Activated T-helper 1 cell treated with anti-CD3 and anti-CD28 coated beads, Interleukin-12 subunit alpha, Interleukin-12 subunit beta, Interleukin-2, Interleukin-4 antibody, amounts not matched to agents 30 ng/mL and 10 ng/mL and 1 ng/mL, durations not matched to agents 14 hours and 24 hours and 36 hours (primary cell): ENCODE measurements at regions of chr6 and their contacts with region 1.

Region 1: GRCh38 chr6:3157131-3157927 is at the start of gene TUBB2A:
- DNase-seq: peak; percentile 83
- H3K4me3 Mint-ChIP-seq: peak within 1 kb of the TSS; percentile 86
- H3K27ac Mint-ChIP-seq: peak within 1 kb of the TSS; percentile 76
- H3K4me1 Mint-ChIP-seq: peaks cover 22% of the 10 kb centered on the region
- H3K27me3 Mint-ChIP-seq: peaks cover 54% of the 10 kb centered on the region
- total RNA-seq, gene TUBB2A: 5.2 and 5.6 TPM in 2 replicates

Region 2: GRCh38 chr6:3181105-3181504 is 23.8 kb after region 1 on chr6:
- intact Hi-C with region 1: loop called (anchors 1 kb)
- DNase-seq: no peak
- H3K4me3 Mint-ChIP-seq: no peak overlapping the region
- H3K27ac Mint-ChIP-seq: no peak overlapping the region
- H3K4me1 Mint-ChIP-seq: peaks cover 5% of the 10 kb centered on the region
- H3K27me3 Mint-ChIP-seq: peaks cover 17% of the 10 kb centered on the region

Region 3: DNA sequence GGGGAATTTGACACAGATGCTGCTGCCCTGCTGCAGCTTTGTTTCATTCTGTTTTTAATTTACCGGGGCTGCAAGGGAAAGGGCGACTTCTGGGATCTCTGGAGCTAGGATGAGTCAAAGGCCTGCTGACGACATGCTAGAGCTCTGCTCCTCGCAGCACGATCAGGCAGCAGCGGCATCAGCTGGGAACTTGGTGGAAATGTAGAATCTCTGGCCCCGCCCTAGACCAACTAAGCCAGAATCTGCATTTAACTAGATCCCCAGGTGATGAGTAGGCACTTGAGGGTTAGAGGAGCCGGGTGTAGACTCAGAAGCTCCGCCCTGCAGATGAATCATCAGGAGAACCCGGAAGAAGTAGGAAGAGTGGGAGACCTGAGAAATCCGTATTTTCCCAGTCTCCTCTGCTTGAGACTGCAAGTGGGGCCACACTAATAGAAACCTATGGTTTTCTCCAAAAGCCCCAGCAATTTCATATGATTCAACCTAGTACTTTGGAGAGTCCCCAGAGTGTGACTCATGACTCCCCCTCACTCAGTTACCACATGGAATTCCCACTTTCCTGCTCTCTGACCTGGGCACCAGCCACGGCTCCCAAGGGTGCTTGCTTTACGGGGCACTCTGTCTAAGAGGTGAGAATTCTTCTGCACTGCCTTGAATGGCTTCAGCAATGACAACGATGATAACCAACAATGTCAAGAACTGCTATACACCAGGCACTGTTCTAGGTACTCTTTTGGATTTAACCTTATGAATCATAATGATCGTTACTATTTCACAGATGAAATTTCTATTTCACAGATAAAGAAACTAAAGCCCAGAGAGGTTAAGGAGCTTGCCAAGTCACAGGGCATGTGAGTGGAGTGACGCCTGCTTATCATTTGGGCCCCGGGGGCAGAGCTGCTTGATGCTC is 52.0 kb after region 1 on chr6:
- intact Hi-C with region 1: loop called (anchors 1 kb)
- DNase-seq: no peak
- H3K4me3 Mint-ChIP-seq: peak overlapping the region; percentile 43
- H3K27ac Mint-ChIP-seq: peak overlapping the region; percentile 89
- H3K4me1 Mint-ChIP-seq: peaks cover 41% of the 10 kb centered on the region
- H3K27me3 Mint-ChIP-seq: peaks cover 23% of the 10 kb centered on the region

Region 4: DNA sequence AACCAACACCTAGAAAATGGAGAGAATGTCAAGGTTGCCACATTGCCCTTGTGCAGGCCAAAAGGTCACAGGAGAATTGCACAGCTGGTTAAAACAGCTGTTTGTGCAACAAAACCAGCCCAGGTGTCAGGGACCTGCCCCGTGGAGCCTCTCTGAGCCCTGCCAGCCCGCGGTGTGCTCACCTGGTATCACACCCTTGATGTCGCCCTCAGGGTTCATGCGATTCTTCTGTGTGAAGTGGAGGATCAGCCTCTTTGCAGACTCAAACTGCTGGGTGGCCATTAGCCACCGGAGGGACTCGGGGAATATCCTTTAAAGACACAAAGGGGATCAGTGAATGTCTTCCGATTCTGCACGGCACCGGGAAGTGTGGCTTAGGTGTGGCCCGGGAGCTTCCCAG is 140.6 kb after region 1 on chr6:
- intact Hi-C with region 1: no loop called
- DNase-seq: no peak
- H3K4me3 Mint-ChIP-seq: no peak overlapping the region
- H3K27ac Mint-ChIP-seq: no peak overlapping the region
- H3K4me1 Mint-ChIP-seq: no peaks in the 10 kb centered on the region
- H3K27me3 Mint-ChIP-seq: peaks cover 2% of the 10 kb centered on the region